K562 (cell line): ENCODE measurements at regions of chr1 and their contacts with region 1.

Region 1: GRCh38 chr1:182331387-182331786 is 60.2 kb downstream of the GLUL start:
- DNase-seq: no peak
- ATAC-seq: no peak
- H3K4me3 ChIP-seq: no peak overlapping the region
- H3K27ac ChIP-seq: no peak overlapping the region
- H3K4me1 ChIP-seq: peaks cover 23 to 45% of the 10 kb centered on the region in 2 experiments
- H3K27me3 ChIP-seq: no peaks in the 10 kb centered on the region
- CTCF ChIP-seq: no peak
- EP300 ChIP-seq: no peak
- POLR2A ChIP-seq: no peak
- RAD21 ChIP-seq: no peak

Region 2: DNA sequence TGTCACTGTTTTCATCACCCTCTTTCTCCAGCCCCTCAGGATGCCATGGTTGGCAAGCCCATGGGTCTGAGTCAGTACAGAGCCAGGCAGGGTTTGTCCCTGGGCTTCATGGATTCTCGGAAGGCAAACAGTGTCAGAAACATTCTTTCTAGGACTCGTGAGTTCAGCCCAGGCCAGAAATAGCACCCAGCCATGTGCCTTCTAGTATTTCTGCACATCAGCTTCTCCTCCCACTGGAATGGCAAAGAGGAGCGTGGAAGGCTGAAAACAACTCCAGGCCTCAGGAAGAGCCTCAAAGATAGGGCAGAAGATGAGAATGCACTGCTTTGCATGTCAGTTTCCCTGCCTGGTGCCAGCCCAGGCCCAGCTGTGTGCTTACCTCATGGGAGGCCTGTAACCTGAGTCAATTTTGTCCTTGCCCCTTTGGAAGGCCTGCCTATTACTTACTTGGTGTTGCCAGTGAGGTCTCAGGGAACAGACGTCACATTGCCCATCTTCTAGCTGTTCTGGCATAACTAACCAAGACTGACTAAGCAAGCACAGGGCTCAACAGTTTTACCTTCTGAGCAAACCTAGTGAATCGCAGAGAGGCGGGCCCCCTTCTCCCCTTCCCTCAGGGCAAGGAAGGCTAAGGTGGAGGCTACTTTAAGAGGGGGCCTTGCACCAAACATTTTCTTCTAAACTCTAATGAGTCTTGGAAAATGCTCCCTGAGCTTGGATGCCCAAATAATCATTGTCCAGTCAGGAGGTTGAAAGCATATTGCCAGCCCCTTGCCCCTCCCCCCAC is 17.8 kb after region 1 on chr1:
- CTCF ChIA-PET with region 1: no interaction called
- POLR2A ChIA-PET with region 1: interaction called, 16 read pairs
- in situ Hi-C with region 1: no loop called
- intact Hi-C with region 1: no loop called
- DNase-seq: no peak
- ATAC-seq: peak; percentile 25
- H3K4me3 ChIP-seq: no peak overlapping the region
- H3K27ac ChIP-seq: no peak overlapping the region
- H3K4me1 ChIP-seq: peaks cover 5 to 14% of the 10 kb centered on the region in 2 experiments; a peak in 3 of 5 replicates
- H3K27me3 ChIP-seq: no peaks in the 10 kb centered on the region
- CTCF ChIP-seq: no peak
- EP300 ChIP-seq: no peak
- POLR2A ChIP-seq: no peak
- RAD21 ChIP-seq: no peak